ENCODE measurements at regions of chr6 and their contacts with region 1.

Region 1: GRCh38 chr6:24431045-24431451 is 28.3 kb downstream of the MRS2 start:
- DNase-seq: no peak

Region 2: GRCh38 chr6:24245275-24245674 is 185.8 kb before region 1 on chr6:
- intact Hi-C with region 1: no loop called
- DNase-seq: no peak

Region 3: DNA sequence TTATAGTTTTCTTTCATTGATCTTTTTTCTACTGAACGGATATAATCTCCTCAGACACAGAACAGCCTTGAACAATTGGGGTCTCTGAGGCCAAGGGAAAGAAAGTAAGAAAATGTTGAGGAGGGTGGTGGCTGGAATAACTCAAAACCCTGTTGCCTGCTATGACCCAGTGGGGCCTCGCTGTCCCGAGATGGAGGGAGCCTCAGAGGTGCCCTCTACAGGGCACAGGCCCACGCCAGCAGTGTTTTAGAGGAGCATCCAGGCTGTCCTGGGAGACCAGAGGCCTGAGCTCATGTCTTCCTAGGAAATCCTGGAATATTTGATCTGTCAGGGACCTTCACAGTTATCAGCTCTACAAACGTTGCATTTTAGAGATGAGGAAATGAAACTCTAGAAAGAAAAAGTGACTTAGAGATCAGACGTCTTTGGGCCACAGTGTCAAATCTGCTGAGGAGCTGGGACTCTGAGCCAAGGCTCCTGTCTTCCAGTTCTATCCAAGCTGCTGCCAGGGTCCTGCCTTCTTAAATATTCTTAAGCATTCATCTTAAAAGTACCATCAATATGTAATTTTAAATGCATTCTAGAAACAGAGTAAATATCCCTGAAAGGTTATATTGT is 90.0 kb after region 1 on chr6:
- intact Hi-C with region 1: loop called (anchors 5 kb)
- DNase-seq: no peak

Region 4: DNA sequence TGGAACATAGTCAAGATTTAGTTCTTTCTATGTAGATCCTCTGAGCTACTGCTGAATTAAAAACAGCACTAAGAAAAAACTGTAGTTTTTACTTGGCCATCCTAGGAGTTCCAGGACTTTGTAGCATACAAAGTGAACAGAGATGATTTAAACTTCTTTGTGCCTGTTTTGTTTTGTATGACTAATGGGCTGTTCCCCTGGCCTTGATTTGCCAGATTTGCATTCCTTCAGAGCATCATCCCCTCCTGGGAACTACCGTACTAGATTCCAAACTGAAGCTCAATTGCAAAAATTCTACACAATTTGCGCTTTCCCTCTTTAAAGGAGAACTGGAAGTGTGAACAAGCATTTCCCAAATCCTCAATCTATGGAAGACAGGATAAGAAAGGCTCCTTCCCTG is 258.9 kb after region 1 on chr6:
- intact Hi-C with region 1: loop called (anchors 10 kb)
- DNase-seq: no peak